ENCODE measurements at regions of chr7 and their contacts with region 1.

Region 1: GRCh38 chr7:44131173-44132029 is 8.1 kb upstream of the POLD2 start:
- DNase-seq: peak; percentile 69 to 90 (median 85)
- ATAC-seq: peak; percentile 99 to 100 (median 99)
- H3K4me3 ChIP-seq: no peak overlapping the region
- H3K27ac ChIP-seq: no peak overlapping the region
- H3K4me1 ChIP-seq: peaks cover 0 to 9% (median 4%) of the 10 kb centered on the region in 4 donors
- H3K27me3 ChIP-seq: no peaks in the 10 kb centered on the region
- CTCF ChIP-seq: peak; percentile 51 to 81 (median 74)
- POLR2A ChIP-seq: no peak

Region 2: GRCh38 chr7:44097064-44097932 is 34.1 kb before region 1 on chr7:
- intact Hi-C with region 1: no loop called
- DNase-seq: no peak
- ATAC-seq: no peak
- H3K4me3 ChIP-seq: no peak overlapping the region
- H3K27ac ChIP-seq: no peak overlapping the region
- H3K4me1 ChIP-seq: no peaks in the 10 kb centered on the region
- H3K27me3 ChIP-seq: no peaks in the 10 kb centered on the region
- CTCF ChIP-seq: no peak
- POLR2A ChIP-seq: no peak

Region 3: GRCh38 chr7:44196450-44196872 is 65.1 kb after region 1 on chr7:
- intact Hi-C with region 1: loop called in 1 of 2 experiments (anchors 10 kb)
- DNase-seq: no peak
- ATAC-seq: peak; percentile 64 to 71 (median 65)
- H3K4me3 ChIP-seq: no peak overlapping the region
- H3K27ac ChIP-seq: no peak overlapping the region
- H3K4me1 ChIP-seq: peaks cover 0 to under 1% (median 0%) of the 10 kb centered on the region in 4 donors
- H3K27me3 ChIP-seq: no peaks in the 10 kb centered on the region
- CTCF ChIP-seq: peak; percentile 47 to 69 (median 62)
- POLR2A ChIP-seq: no peak

Region 4: GRCh38 chr7:44240983-44241510 is 109.6 kb after region 1 on chr7:
- intact Hi-C with region 1: no loop called
- DNase-seq: peak; percentile 73 to 77 (median 76)
- ATAC-seq: peak; percentile 87 to 97 (median 94)
- H3K4me3 ChIP-seq: no peak overlapping the region
- H3K27ac ChIP-seq: no peak overlapping the region
- H3K4me1 ChIP-seq: no peaks in the 10 kb centered on the region
- H3K27me3 ChIP-seq: no peaks in the 10 kb centered on the region
- CTCF ChIP-seq: peak; percentile 69 to 80 (median 76)
- POLR2A ChIP-seq: no peak

Measured in right lobe of liver (tissue), 6 donors.